Motor neuron (in vitro differentiated cells): ENCODE measurements at regions of chr1 and their contacts with region 1.

Region 1: GRCh38 chr1:229227298-229227919 is 43.5 kb upstream of the RAB4A start:
- ATAC-seq: peak; percentile 26 to 78 (median 49)
- H3K4me3 ChIP-seq: peak overlapping the region in 1 of 5 donors; percentile 12
- H3K27ac ChIP-seq: peak overlapping the region in 1 of 2 donors; percentile 34
- H3K4me1 ChIP-seq: peaks cover 41 to 58% of the 10 kb centered on the region in 2 donors

Region 2: DNA sequence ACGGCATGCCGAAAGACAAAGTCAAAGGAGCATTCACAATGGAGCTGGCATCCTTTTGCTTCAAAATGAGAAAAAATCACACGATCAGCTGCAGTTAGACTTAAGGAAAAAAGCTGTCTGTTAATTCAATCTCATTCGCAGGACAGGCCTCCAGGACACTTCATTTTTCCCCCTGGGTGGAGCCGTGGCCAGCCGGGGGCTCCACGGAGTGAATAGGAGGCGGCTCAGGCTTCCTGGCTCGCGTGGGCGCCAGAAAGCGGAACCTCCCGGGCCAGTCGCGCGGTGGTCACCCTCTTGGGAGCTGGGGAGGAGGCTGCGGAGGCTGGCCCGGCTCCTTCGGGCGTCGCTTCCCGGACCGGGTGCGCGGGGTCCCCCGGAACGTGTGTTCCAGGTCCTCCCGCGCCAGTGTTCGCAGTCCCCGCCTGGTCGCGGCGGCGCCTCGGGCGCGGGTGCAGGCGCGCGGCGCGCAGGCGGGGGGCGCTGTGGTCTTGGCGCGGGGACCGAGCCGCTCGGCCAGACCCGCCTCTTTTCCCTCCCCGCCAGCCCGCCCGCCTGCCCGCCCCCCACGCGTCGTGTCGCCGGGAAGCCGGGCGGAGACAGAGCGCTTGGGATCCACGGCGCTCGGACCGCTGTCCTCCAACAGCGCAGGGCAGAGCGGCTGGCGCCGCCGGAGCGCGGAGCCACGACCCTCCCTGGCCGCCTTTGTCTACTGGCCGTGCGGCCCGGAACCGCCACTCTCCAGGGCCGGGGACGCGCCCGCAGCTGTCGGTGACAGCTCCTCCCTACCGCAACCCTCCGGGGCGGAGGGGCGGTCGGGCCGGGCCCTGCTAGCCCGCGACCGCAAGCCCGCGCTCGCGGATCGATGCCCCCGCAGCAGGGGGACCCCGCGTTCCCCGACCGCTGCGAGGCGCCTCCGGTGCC is 492.3 kb before region 1 on chr1 and contains the start of gene RHOU:
- in situ Hi-C with region 1: loop called in 3 of 9 experiments (anchors 10 to 25 kb)
- ATAC-seq: peak; percentile 84 to 90 (median 88)
- H3K4me3 ChIP-seq: peak within 1 kb of the TSS; percentile 62 to 92 (median 88)
- H3K27ac ChIP-seq: peak within 1 kb of the TSS; percentile 79 to 89
- H3K4me1 ChIP-seq: peaks cover 16% of the 10 kb centered on the region in 2 donors
- total RNA-seq, gene RHOU: 3.3 to 51.6 (median 21.2) TPM